PC-3 (cell line): ENCODE measurements at regions of chr13 and their contacts with region 1.

Region 1: DNA sequence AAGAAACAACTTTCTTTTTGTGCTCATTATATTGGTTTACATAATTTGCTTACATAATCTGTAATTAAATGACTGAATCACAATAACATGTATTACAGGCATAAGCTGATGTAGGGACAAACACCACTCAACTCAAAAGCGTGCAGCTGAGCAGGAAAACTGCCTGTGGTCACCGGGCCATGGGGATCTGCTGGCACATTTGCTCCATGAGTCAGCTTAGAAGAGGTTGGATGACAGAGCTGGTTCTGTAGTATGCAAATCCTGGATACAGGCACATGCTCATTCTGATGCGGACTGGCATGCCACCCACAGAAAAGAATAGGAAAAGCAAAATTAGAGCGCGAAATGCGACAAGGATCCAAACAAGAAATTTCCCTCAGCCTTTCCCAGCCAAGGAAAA is 128.6 kb downstream of the USP12 start:
- DNase-seq: peak; percentile 93
- ATAC-seq: peak; percentile 83
- H3K4me3 ChIP-seq: no peak overlapping the region
- H3K27ac ChIP-seq: peak overlapping the region; percentile 83
- H3K4me1 ChIP-seq: peaks cover 47% of the 10 kb centered on the region
- H3K27me3 ChIP-seq: no peaks in the 10 kb centered on the region
- CTCF ChIP-seq: no peak

Region 2: DNA sequence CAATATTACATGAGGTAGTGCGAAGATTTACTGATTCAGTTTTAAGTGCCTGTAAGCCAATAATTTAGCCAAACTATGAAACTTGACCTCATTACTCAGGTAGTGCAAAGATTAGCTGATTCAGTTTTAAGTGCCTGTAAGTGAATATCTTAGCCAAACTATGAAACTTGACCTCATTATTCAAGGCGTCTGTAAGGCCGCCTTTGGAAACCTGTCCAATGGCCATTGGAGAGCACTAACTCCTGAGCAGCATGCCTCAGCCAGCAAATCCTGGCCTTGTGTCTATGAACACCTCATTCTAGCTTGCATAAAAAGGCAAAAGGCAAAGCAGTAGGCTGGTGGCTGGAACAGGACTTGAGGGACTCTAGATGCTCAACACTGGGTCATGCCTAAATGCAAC is 155.4 kb before region 1 on chr13:
- CTCF ChIA-PET with region 1: no interaction called
- POLR2A ChIA-PET with region 1: interaction called, 10 read pairs
- intact Hi-C with region 1: no loop called
- DNase-seq: no peak
- ATAC-seq: no peak
- H3K4me3 ChIP-seq: no peak overlapping the region
- H3K27ac ChIP-seq: no peak overlapping the region
- H3K4me1 ChIP-seq: no peaks in the 10 kb centered on the region
- H3K27me3 ChIP-seq: peaks cover 37% of the 10 kb centered on the region
- CTCF ChIP-seq: no peak

Region 3: GRCh38 chr13:27022571-27023311 is 20.3 kb before region 1 on chr13:
- CTCF ChIA-PET with region 1: no interaction called
- POLR2A ChIA-PET with region 1: no interaction called
- intact Hi-C with region 1: loop called (anchors 1 kb)
- DNase-seq: peak; percentile 78
- ATAC-seq: peak; percentile 71
- H3K4me3 ChIP-seq: no peak overlapping the region; the same call in 1 of the 2 replicates
- H3K27ac ChIP-seq: peak overlapping the region; percentile 93
- H3K4me1 ChIP-seq: peaks cover 30% of the 10 kb centered on the region
- H3K27me3 ChIP-seq: no peaks in the 10 kb centered on the region
- CTCF ChIP-seq: no peak

Region 4: DNA sequence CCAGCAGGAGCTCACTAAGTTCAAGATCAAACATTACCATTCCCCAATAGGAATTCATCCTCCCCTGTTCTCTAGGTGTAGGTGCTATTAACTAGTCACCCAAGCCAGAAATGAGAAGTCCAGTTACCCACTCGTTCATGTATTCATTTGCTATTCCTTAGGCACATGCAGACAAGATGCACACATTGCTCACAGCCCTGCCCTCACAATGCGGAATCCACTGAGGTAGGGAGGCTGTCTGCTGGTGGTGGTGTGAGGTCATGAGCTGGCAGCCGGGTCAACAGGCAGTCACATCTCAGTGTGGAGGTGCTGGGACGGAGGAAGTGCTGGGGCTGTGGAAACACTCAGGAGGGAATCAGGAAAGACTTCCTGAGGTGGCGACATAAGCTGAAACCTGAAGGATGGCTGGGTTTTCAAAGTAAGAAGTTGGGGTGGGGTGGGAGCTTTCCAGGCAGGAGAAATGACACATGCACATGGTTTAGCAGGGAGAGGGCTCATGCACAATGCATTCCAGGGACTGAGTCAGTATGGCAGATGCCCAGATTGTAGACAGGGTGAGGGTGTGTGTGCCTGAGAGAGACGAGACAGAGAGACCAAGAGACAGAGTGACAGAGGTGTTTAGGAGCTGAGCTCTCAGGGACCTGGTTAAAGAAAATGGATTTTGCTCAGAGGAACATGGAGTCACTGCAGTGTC is 11.0 kb after region 1 on chr13:
- CTCF ChIA-PET with region 1: no interaction called
- POLR2A ChIA-PET with region 1: no interaction called
- intact Hi-C with region 1: no loop called
- DNase-seq: peak; percentile 91
- ATAC-seq: peak; percentile 96
- H3K4me3 ChIP-seq: peak overlapping the region; percentile 29; the same call in 1 of the 2 replicates
- H3K27ac ChIP-seq: peak overlapping the region; percentile 91
- H3K4me1 ChIP-seq: peaks cover 27% of the 10 kb centered on the region
- H3K27me3 ChIP-seq: no peaks in the 10 kb centered on the region
- CTCF ChIP-seq: no peak

Region 5: DNA sequence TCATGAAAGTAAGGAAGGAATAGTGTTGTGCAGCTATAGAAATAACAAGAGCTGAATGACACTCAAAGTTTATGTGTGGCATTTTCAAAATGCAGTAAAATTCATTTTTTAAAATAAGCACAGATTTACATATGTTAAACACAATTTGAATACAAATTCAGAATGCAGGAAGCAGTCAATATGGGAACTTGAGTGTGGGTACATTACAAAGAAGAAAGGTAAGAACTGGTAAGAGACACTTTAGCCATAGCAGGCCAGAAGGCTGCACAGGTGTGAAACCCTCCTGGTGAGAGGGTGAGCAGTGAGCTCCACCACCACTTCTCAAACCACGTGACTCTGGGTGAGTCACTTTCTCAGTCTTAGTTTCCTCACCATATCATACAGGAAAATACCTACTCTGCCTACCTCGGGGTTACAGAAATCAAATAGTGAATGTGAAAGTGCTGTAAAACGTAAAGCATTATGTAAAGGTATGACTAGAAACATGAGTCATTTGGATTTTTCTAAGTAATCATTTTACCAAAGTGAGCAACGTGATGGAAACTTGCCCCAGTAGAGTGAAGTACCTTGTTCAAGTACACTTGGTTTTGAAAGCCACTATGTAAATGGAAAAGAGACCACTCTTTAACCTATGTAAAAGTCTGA is 88.1 kb after region 1 on chr13:
- CTCF ChIA-PET with region 1: no interaction called
- POLR2A ChIA-PET with region 1: no interaction called
- intact Hi-C with region 1: no loop called
- DNase-seq: peak; percentile 87
- ATAC-seq: peak; percentile 48
- H3K4me3 ChIP-seq: no peak overlapping the region
- H3K27ac ChIP-seq: peak overlapping the region; percentile 71
- H3K4me1 ChIP-seq: peaks cover 55% of the 10 kb centered on the region
- H3K27me3 ChIP-seq: no peaks in the 10 kb centered on the region
- CTCF ChIP-seq: no peak

Region 6: GRCh38 chr13:27270594-27271520 is 227.8 kb after region 1 on chr13 and contains the start of gene RASL11A:
- CTCF ChIA-PET with region 1: no interaction called
- POLR2A ChIA-PET with region 1: no interaction called
- intact Hi-C with region 1: loop called (anchors 5 kb)
- DNase-seq: peak; percentile 87
- ATAC-seq: peak; percentile 87
- H3K4me3 ChIP-seq: peak within 1 kb of the TSS; percentile 99
- H3K27ac ChIP-seq: peak within 1 kb of the TSS; percentile 26
- H3K4me1 ChIP-seq: peaks cover 18% of the 10 kb centered on the region
- H3K27me3 ChIP-seq: no peaks in the 10 kb centered on the region
- CTCF ChIP-seq: peak; percentile 82
- total RNA-seq, gene RASL11A: 43.3 and 59.7 TPM in 2 replicates